ENCODE measurements at regions of chr7 and their contacts with region 1.

Region 1: GRCh38 chr7:139011373-139011772 is 24.5 kb downstream of the ZC3HAV1L start:
- DNase-seq: no peak
- ATAC-seq: no peak
- H3K4me3 ChIP-seq: no peak overlapping the region
- H3K27ac ChIP-seq: no peak overlapping the region
- H3K4me1 ChIP-seq: no peaks in the 10 kb centered on the region
- CTCF ChIP-seq: no peak
- EP300 ChIP-seq: no peak
- POLR2A ChIP-seq: no peak
- RAD21 ChIP-seq: no peak

Region 2: GRCh38 chr7:139043823-139044812 is 32.7 kb after region 1 on chr7:
- CTCF ChIA-PET with region 1: no interaction called
- POLR2A ChIA-PET with region 1: no interaction called
- DNase-seq: peak in 1 of 2 experiments; percentile 58
- ATAC-seq: peak in 1 of 2 experiments; percentile 47; a peak in 3 of 6 replicates
- H3K4me3 ChIP-seq: no peak overlapping the region
- H3K27ac ChIP-seq: no peak overlapping the region
- H3K4me1 ChIP-seq: peaks cover 11% of the 10 kb centered on the region; the same call in 1 of the 3 replicates
- CTCF ChIP-seq: no peak
- EP300 ChIP-seq: no peak
- POLR2A ChIP-seq: no peak
- RAD21 ChIP-seq: no peak

Region 3: GRCh38 chr7:139299296-139299695 is 287.9 kb after region 1 on chr7:
- CTCF ChIA-PET with region 1: no interaction called
- POLR2A ChIA-PET with region 1: interaction called, 10 read pairs
- DNase-seq: no peak
- ATAC-seq: no peak
- H3K4me3 ChIP-seq: no peak overlapping the region
- H3K27ac ChIP-seq: no peak overlapping the region
- H3K4me1 ChIP-seq: peaks cover 20% of the 10 kb centered on the region
- CTCF ChIP-seq: no peak
- EP300 ChIP-seq: no peak
- POLR2A ChIP-seq: no peak
- RAD21 ChIP-seq: no peak